Calu3 (cell line): ENCODE measurements at regions of chr6 and their contacts with region 1.

Region 1: DNA sequence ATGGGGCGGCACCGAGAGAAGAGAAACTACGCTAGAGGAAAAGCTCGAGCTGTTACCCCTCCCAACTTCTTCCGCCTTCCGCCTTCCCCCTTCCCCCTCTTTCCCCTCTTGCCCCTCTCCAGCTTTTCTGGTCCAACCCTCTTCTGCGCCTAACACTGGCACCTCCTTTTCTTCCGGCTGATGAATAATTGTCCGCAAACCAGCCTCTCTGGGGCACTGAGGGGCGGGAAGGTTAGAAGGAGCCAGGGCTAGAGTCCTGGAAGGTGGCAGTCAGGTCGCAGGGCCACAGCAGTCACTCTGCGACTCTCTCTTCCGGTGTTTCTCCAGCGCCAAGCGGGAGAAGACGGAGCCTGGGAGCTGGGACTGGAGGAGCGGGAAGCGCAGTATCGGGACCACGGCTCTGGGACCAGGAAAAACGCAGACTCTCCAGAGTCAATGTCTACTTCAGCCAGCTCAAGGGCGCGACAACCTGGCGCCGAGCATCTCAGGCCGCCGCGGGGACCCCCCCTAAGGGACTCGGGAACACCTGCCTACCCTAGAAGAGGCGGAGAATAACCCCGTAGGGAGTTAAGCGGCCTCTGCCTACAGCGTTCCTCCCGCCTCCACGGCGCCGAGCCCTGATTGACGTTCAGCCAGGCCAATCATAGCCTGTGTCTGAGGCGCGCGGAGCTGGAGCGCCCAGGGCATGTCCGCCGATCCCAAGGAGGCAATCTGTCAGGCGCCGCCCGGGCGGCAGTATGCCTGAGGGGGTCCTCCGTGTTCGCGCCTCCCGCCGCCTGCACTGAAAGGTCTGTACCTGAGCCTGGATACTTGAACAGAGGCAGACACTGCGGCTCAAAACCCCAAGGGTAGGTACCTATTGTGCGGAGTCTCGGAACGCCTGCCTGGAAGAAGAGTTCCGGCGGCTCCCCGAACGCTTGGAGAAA is 40.4 kb downstream of the PSMB9 start:
- DNase-seq: peak; percentile 99
- H3K4me3 Mint-ChIP-seq: peak overlapping the region; percentile 88
- H3K27ac Mint-ChIP-seq: peak overlapping the region; percentile 97
- H3K4me1 Mint-ChIP-seq: peaks cover 38% of the 10 kb centered on the region
- H3K27me3 Mint-ChIP-seq: no peaks in the 10 kb centered on the region
- CTCF ChIP-seq: peak; percentile 37

Region 2: DNA sequence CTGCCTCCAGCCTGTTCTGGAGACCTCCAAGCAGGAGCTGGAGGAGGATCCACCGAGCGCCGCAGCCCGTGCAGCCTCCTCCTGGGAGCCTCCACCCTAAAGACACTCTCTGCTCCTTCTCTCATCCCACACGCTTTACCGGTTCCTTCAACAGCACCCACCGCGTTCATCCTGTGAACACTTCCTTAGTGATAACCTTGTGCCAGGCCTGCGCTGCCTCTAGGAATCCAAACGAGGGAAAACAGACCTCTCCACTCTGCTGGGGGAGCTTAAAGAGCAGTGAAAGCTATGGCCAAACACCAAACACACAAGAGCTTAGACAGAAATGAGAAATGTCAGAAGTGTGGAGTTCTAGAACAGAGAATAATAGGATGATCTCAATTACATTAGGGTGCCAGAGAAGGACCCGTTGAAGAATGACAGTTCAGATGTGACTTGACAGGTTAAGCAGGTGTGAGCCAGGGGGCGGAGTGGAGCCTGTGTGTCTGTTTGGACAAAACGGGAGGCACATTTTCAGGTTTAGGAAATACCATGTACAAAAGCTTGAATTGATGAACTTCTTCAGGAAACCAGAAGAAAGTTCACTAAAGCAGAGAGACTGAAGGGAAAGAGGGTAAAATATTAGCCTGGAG is 335.8 kb before region 1 on chr6:
- CTCF ChIA-PET with region 1: no interaction called
- intact Hi-C with region 1: no loop called
- DNase-seq: no peak
- H3K4me3 Mint-ChIP-seq: peak overlapping the region; percentile 59
- H3K27ac Mint-ChIP-seq: no peak overlapping the region
- H3K4me1 Mint-ChIP-seq: peaks cover 8% of the 10 kb centered on the region
- H3K27me3 Mint-ChIP-seq: peaks cover 24% of the 10 kb centered on the region
- CTCF ChIP-seq: no peak

Region 3: DNA sequence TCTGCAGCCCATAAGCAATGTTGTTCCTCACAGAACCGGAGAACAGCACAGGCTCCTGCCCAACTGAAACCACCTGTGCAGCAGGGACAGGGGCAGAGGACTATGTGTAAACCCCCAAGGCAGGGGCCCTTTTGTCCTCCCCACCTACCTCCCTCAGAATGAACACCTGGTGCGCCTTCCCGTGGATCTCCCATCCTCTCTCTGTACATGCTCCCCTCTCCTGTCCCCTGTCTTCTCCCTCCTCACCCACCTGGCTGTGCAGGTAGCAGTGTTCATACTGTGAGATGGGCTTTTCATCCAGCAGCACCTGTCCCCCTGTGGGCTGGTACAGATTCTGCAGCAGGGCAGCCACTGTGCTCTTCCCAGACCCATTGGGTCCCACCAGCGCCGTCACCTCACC is 64.3 kb before region 1 on chr6:
- CTCF ChIA-PET with region 1: no interaction called
- intact Hi-C with region 1: no loop called
- DNase-seq: no peak
- H3K4me3 Mint-ChIP-seq: no peak overlapping the region
- H3K27ac Mint-ChIP-seq: no peak overlapping the region
- H3K4me1 Mint-ChIP-seq: no peaks in the 10 kb centered on the region
- H3K27me3 Mint-ChIP-seq: no peaks in the 10 kb centered on the region
- CTCF ChIP-seq: no peak

Region 4: DNA sequence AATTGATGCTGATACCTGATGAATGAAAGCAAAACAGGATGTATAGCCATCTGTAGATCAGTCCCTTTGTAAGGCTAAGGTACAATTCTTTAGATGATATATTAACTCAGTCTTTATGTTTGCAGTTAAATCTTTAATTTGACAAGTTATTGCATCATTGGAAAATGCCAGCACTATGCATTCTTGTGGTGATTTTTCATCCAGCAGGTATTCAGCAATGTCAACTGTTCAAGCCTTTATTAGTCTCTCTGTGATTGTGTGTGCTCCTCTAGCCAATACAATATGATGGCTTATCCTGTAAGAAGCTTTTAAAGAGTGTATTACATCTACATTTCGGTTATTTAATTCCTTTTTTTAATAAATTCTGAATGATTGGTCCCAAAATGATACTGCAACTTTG is 12.2 kb after region 1 on chr6:
- CTCF ChIA-PET with region 1: interaction called, 25 read pairs
- intact Hi-C with region 1: no loop called
- DNase-seq: peak; percentile 34
- H3K4me3 Mint-ChIP-seq: no peak overlapping the region
- H3K27ac Mint-ChIP-seq: peak overlapping the region; percentile 89
- H3K4me1 Mint-ChIP-seq: peaks cover 68% of the 10 kb centered on the region
- H3K27me3 Mint-ChIP-seq: no peaks in the 10 kb centered on the region
- CTCF ChIP-seq: no peak